Esophagus muscularis mucosa (tissue), 4 donors: ENCODE measurements at regions of chr3 and their contacts with region 1.

Region 1: GRCh38 chr3:133426721-133427120 is 26.9 kb downstream of the BFSP2 start:
- DNase-seq: no peak
- H3K4me3 ChIP-seq: no peak overlapping the region
- H3K27ac ChIP-seq: no peak overlapping the region
- H3K4me1 ChIP-seq: peaks cover 0 to 9% (median 8%) of the 10 kb centered on the region in 4 donors
- H3K27me3 ChIP-seq: peaks cover 0 to 10% (median 0%) of the 10 kb centered on the region in 4 donors
- CTCF ChIP-seq: no peak
- EP300 ChIP-seq: no peak
- POLR2A ChIP-seq: no peak

Region 2: GRCh38 chr3:133384331-133385027 is 42.2 kb before region 1 on chr3:
- intact Hi-C with region 1: loop called (anchors 5 kb)
- DNase-seq: no peak
- H3K4me3 ChIP-seq: no peak overlapping the region
- H3K27ac ChIP-seq: no peak overlapping the region
- H3K4me1 ChIP-seq: peaks cover 0 to 23% (median 14%) of the 10 kb centered on the region in 4 donors
- H3K27me3 ChIP-seq: no peaks in the 10 kb centered on the region
- CTCF ChIP-seq: peak; percentile 83 to 85 (median 84)
- EP300 ChIP-seq: no peak
- POLR2A ChIP-seq: no peak